Gastrocnemius medialis (tissue), 4 donors: ENCODE measurements at regions of chr11 and their contacts with region 1.

Region 1: GRCh38 chr11:34174412-34175041 is 69.1 kb downstream of the NAT10 start:
- DNase-seq: peak; percentile 62 to 68
- ATAC-seq: peak; percentile 84 to 93
- H3K4me3 ChIP-seq: peak overlapping the region; percentile 26 to 43 (median 33)
- H3K27ac ChIP-seq: peak overlapping the region in 3 of 4 donors; percentile 6 to 45 (median 12)
- H3K4me1 ChIP-seq: peaks cover 5 to 6% of the 10 kb centered on the region in 2 donors
- H3K27me3 ChIP-seq: no peaks in the 10 kb centered on the region
- CTCF ChIP-seq: peak; percentile 94 to 99 (median 97)
- POLR2A ChIP-seq: no peak

Region 2: DNA sequence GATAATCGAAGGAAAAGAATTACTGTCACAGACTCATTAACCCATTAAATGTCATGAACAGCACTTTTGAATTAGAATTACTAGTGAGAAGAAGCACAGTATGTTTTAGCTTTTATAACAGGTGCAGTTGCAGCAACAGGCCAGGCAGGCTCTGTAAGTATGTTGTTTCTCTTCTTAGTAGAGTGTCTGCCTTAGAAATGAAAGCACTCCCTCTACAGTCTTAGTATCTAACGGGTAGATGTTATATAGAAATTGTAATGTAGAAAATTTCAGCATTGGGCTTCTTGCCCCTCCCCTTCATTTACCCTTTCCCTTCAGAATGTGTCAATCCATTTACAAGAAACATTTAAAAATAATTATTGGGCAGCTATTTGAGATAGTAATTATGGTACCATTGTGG is 829.9 kb before region 1 on chr11:
- in situ Hi-C with region 1: no loop called
- intact Hi-C with region 1: no loop called
- DNase-seq: no peak
- ATAC-seq: peak; percentile 69 to 83
- H3K4me3 ChIP-seq: no peak overlapping the region
- H3K27ac ChIP-seq: peak overlapping the region; percentile 5 to 52 (median 29)
- H3K4me1 ChIP-seq: peaks cover 12 to 19% of the 10 kb centered on the region in 2 donors
- H3K27me3 ChIP-seq: no peaks in the 10 kb centered on the region
- CTCF ChIP-seq: peak in 3 of 5 experiments; percentile 6 to 30 (median 11)
- POLR2A ChIP-seq: no peak

Region 3: DNA sequence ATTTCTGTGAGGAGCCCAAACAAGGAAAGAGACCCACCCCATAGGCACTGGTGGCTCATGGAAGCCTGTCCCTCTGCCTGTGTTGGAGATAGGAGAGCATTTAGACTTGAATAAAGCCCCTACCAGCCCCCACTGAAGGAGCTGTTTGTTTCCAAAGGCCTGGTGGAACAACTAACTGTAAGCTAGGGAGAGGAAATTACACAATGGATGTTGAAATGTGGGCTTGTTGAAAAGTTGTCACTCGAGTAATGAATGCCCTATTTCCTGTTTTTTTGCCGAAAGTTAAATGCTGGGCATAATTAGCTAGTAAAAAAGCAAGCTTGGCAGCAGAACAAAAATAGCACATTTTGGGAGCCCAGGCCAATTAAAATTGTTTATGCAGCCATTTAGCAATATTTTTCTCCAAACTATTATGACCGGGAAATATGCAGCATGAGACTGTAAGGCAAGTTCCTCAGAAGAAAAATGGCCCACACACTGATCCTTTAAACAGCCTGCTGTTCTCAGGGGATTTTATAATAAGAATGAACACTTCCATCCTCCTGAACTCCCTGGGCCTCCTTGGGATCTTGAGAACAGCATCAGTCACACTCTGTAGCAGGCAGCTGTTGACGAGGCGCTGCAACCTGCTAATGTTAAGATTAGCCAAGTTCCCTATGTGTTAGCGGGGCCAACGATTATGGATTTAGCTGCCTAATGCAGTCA is 244.1 kb before region 1 on chr11:
- in situ Hi-C with region 1: no loop called
- intact Hi-C with region 1: no loop called
- DNase-seq: peak; percentile 11 to 27
- ATAC-seq: peak; percentile 73 to 81
- H3K4me3 ChIP-seq: no peak overlapping the region
- H3K27ac ChIP-seq: peak overlapping the region; percentile 64 to 75 (median 74)
- H3K4me1 ChIP-seq: peaks cover 9 to 16% of the 10 kb centered on the region in 2 donors
- H3K27me3 ChIP-seq: no peaks in the 10 kb centered on the region
- CTCF ChIP-seq: no peak
- POLR2A ChIP-seq: no peak

Region 4: DNA sequence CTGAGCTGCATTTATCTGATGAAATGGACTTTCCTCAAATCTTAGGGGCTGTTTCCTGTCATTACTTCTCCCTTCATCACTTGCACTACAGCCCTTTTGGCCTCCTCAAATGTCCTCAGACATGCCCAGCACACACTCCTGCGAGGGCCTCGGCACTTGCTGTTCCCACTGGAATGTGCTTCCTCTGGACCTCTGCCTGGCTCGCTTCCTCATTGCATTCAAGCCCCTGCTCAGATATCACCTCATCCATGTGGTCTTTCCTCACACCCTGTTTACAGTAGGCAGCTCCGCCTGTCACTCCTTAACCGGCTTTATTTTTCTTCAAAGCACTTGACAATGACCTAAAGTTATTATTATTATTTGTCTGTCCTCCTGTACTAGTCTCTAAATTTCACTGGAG is 60.1 kb before region 1 on chr11:
- in situ Hi-C with region 1: no loop called
- intact Hi-C with region 1: no loop called
- DNase-seq: peak; percentile 19 to 32
- ATAC-seq: peak; percentile 74 to 82
- H3K4me3 ChIP-seq: no peak overlapping the region
- H3K27ac ChIP-seq: peak overlapping the region in 1 of 4 donors; percentile 62
- H3K4me1 ChIP-seq: peaks cover 0 to 15% of the 10 kb centered on the region in 2 donors
- H3K27me3 ChIP-seq: no peaks in the 10 kb centered on the region
- CTCF ChIP-seq: no peak
- POLR2A ChIP-seq: no peak

Region 5: GRCh38 chr11:34250732-34251639 is 76.5 kb after region 1 on chr11:
- in situ Hi-C with region 1: no loop called
- intact Hi-C with region 1: loop called (anchors 5 kb)
- DNase-seq: peak; percentile 68 to 87
- ATAC-seq: peak; percentile 93 to 95
- H3K4me3 ChIP-seq: peak overlapping the region in 3 of 4 donors; percentile 8 to 36 (median 34)
- H3K27ac ChIP-seq: peak overlapping the region; percentile 69 to 75 (median 74)
- H3K4me1 ChIP-seq: peaks cover 30 to 31% of the 10 kb centered on the region in 2 donors
- H3K27me3 ChIP-seq: no peaks in the 10 kb centered on the region
- CTCF ChIP-seq: no peak
- POLR2A ChIP-seq: no peak

Region 6: DNA sequence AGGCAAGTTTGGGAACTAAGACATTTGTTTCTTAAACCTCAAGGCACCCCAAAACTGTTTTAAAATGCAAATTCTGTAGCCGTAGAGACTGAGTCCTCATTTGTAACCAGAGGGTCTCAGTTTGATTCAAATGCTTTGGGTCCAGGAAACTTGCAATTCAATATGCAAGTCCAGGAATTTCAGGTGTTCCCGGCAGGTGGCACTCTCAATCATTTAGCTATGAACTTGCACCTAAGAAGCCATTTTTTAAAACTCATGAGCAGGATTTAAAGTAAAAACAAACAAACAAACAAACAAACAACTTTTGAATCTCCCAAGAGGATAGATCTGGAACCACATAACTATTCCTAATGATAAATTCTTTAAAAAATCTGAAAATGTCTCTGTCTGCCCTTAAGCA is 192.0 kb after region 1 on chr11:
- in situ Hi-C with region 1: loop called in 3 of 4 experiments (anchors 5 kb)
- intact Hi-C with region 1: no loop called
- DNase-seq: no peak
- ATAC-seq: no peak
- H3K4me3 ChIP-seq: no peak overlapping the region
- H3K27ac ChIP-seq: no peak overlapping the region
- H3K4me1 ChIP-seq: no peaks in the 10 kb centered on the region
- H3K27me3 ChIP-seq: no peaks in the 10 kb centered on the region
- CTCF ChIP-seq: peak in 1 of 5 experiments; percentile 31
- POLR2A ChIP-seq: no peak